ENCODE measurements at regions of chr17 and their contacts with region 1.

Region 1: GRCh38 chr17:64155751-64156544 is 26.0 kb upstream of the ERN1 start:
- DNase-seq: peak in 9 of 10 donors; percentile 51 to 90 (median 85)
- H3K4me3 ChIP-seq: peak overlapping the region in 28 of 59 donors; percentile 3 to 44 (median 22)
- H3K27ac ChIP-seq: peak overlapping the region; percentile 83 to 99 (median 96)
- H3K27me3 ChIP-seq: no peaks in the 10 kb centered on the region
- CTCF ChIP-seq: peak in 45 of 56 donors; percentile 8 to 65 (median 42)

Region 2: DNA sequence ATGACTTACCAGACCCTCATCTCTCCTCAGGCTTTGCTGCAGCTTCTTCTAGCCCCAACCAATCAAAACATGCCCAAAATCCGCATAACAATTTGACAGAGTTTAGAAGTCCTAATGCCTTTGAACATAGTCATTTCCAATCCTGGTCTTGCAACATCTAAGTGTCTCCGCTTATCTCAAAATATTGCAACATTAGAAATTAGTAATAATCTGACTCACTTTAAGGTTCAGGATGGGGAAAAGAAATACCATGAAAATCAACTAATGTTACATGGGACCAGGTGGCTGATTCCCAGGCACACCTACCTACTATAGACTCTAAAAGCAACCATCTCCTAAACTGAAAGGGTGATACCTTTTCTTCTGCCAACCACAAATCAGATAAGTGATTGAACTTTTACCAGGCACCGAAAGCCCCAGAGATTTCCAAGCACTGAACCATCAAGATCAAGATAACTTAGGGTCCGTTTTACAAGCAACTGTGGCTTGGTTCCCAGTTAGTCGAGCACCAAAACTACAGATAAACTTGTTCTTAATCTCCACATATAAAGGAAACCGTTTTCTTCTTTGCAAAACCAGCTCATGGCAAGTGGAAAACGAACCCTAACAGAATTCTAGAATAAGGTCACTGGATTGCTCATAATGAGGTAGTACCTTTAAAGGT is 39.9 kb before region 1 on chr17:
- intact Hi-C with region 1: no loop called
- DNase-seq: no peak
- H3K4me3 ChIP-seq: no peak overlapping the region
- H3K27ac ChIP-seq: no peak overlapping the region
- H3K27me3 ChIP-seq: no peaks in the 10 kb centered on the region
- CTCF ChIP-seq: no peak

Region 3: DNA sequence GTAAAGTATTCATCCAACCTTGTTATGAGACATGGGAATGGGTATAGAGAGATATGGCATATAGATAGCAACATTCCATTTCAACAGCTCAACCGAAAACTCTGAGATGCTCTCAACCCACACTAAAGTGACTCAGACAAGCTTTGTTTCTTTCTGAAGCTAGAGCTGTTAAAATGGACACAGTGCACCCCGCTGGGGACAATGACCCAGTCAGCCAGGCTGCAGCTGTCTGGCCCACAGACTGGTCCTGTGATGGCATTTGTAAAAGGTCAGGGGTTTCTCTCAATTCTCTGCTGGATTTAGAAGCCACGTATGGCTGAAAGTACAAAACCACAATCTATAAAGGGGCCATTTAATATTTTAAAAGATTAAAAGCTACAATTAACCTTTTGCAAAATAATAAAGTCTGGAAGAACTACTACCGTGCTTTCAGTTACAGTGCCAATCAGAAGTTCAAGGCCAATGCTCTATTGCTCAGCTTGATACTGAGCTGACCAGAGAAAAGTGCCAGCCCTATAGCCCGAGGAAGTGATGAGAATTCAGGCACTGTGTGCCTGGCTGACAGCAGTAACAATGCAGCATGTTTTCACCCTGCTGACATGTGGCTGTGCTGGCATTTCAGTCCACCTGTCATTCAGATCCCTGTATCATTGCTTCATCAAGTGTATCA is 46.9 kb after region 1 on chr17:
- intact Hi-C with region 1: loop called (anchors 1 to 5 kb)
- DNase-seq: peak; percentile 44 to 84 (median 78)
- H3K4me3 ChIP-seq: peak overlapping the region in 18 of 59 donors; percentile 1 to 35 (median 12)
- H3K27ac ChIP-seq: peak overlapping the region; percentile 77 to 98 (median 93)
- H3K27me3 ChIP-seq: no peaks in the 10 kb centered on the region
- CTCF ChIP-seq: peak in 25 of 56 donors; percentile 6 to 48 (median 17)

Region 4: DNA sequence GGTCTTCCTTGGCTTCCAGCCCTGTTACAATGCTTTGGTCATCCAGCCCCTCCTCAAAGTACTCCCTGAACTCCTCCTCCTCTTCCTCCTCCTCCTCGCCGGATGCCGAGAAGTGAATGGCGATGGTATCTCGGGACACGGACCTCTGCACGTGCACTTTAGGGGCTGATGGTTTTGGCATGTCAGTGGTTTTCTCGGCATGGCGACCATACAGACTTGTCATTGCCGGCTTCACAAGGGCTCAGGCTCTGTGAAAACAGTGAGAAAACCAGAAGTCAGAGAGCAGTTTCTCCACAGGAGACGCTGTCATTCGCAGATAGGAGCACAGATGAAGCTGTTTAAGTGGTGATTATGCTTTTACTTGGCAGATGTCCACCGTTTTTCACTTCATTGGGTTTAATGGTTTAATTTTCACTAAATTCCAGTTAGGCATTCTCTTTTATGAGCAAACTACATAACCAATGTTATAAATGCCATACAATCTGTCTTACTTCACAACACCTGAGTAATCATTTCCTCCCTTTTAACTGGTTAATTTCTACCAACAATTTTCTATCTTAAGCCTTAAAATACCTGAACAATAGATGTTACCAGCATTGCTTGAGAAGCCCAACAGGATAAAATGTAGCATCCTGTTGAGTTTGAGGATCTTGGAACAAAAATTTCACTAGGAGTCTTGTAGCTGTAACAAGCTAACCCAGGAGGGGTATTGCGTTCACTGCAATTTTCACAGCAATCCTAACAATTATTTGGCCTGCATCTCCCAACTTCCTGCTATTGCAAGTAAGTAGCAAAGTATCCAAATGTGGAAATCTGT is 58.3 kb after region 1 on chr17:
- intact Hi-C with region 1: no loop called
- DNase-seq: no peak
- H3K4me3 ChIP-seq: no peak overlapping the region
- H3K27ac ChIP-seq: peak overlapping the region in 12 of 59 donors; percentile 6 to 77 (median 31)
- H3K27me3 ChIP-seq: no peaks in the 10 kb centered on the region
- CTCF ChIP-seq: no peak